ENCODE measurements at regions of chr21 and their contacts with region 1.

Region 1: GRCh38 chr21:25421327-25422028 is 185.8 kb downstream of the MRPL39 start:
- DNase-seq: peak; percentile 86
- H3K4me3 Mint-ChIP-seq: peak overlapping the region; percentile 59
- H3K27ac Mint-ChIP-seq: peak overlapping the region; percentile 92
- H3K4me1 Mint-ChIP-seq: peaks cover 65% of the 10 kb centered on the region
- H3K27me3 Mint-ChIP-seq: no peaks in the 10 kb centered on the region

Region 2: GRCh38 chr21:25457411-25457810 is 35.9 kb after region 1 on chr21:
- CTCF ChIA-PET with region 1: interaction called, 4 read pairs
- intact Hi-C with region 1: loop called (anchors 2 kb)
- DNase-seq: no peak
- H3K4me3 Mint-ChIP-seq: peak overlapping the region; percentile 48
- H3K27ac Mint-ChIP-seq: peak overlapping the region; percentile 84
- H3K4me1 Mint-ChIP-seq: peaks cover 74% of the 10 kb centered on the region
- H3K27me3 Mint-ChIP-seq: no peaks in the 10 kb centered on the region

Region 3: DNA sequence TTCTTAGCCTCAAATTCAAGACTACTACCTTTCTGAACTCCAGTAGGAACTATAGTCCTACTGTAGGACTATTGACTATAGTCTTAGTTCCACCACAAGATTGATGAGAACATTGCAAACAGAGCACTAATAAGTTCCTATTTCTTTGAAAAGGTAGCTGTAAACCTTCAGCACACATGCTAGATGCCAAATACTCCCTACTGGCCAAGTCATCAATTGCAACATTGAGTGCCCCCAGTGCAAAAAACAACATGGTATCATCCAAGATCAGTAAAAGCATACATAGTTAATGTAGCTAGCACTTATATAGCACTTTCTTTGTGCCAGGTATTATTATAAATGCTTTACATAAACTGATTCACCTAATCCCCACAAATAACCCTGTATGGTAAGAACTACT is 86.0 kb after region 1 on chr21:
- CTCF ChIA-PET with region 1: interaction called, 17 read pairs
- intact Hi-C with region 1: loop called (anchors 1 kb)
- DNase-seq: peak; percentile 55
- H3K4me3 Mint-ChIP-seq: no peak overlapping the region
- H3K27ac Mint-ChIP-seq: peak overlapping the region; percentile 70
- H3K4me1 Mint-ChIP-seq: peaks cover 75% of the 10 kb centered on the region
- H3K27me3 Mint-ChIP-seq: no peaks in the 10 kb centered on the region

Region 4: GRCh38 chr21:25573409-25574206 is 152.1 kb after region 1 on chr21:
- CTCF ChIA-PET with region 1: interaction called, 51 read pairs
- intact Hi-C with region 1: loop called (anchors 1 kb)
- DNase-seq: peak; percentile 82
- H3K4me3 Mint-ChIP-seq: peak overlapping the region; percentile 72
- H3K27ac Mint-ChIP-seq: peak overlapping the region; percentile 95
- H3K4me1 Mint-ChIP-seq: peaks cover 73% of the 10 kb centered on the region
- H3K27me3 Mint-ChIP-seq: no peaks in the 10 kb centered on the region

Region 5: DNA sequence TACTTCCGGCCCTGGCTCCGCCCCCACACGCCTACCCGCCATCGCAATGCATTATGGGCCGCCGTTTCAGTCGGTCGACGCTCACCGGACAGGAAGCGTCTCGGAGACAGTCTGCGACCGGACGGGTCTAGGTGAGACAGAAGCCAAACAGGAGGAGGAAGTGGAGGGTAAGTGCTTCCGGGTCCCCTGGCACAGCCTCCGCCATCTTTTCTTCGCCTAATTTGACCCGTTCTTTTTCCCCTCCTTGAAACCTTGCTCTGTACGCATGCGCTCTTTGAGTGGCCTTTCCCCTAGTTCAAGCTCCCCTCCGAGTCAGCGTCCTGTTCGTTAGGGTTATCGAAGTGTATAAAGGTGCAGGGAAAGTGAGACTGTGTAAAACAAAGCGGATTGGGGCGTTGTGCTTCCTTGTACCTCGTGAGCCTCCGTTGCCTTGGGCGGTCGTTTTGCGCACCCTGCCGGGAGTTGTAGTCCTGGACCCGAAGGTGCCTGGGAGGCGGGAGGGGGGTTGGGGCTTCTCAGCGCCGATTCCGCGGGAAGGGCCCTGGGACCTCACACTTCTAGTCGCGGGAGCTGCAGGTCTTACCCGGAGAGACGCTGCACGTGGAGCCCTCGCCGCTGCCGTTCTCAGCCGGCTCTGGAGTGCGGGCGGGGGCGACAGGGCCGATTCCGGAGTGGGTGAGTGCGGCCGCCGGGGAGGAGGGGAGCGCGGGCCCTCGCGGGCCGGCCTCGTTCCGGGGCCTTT is 313.6 kb after region 1 on chr21 and contains the starts of genes ATP5PF and GABPA:
- CTCF ChIA-PET with region 1: no interaction called
- intact Hi-C with region 1: loop called (anchors 1 kb)
- DNase-seq: peak; percentile 99
- H3K4me3 Mint-ChIP-seq: peak within 1 kb of the TSS; percentile 94
- H3K27ac Mint-ChIP-seq: peak within 1 kb of the TSS; percentile 99
- H3K4me1 Mint-ChIP-seq: peaks cover 48% of the 10 kb centered on the region
- H3K27me3 Mint-ChIP-seq: no peaks in the 10 kb centered on the region
- total RNA-seq, gene ATP5PF: 124 to 132 TPM
- total RNA-seq, gene GABPA: 18.5 to 21.2 TPM